GM12878 (cell line): ENCODE measurements at regions of chr1 and their contacts with region 1.

Region 1: GRCh38 chr1:101438359-101438758 is 201.5 kb downstream of the S1PR1 start:
- DNase-seq: no peak
- ATAC-seq: peak; percentile 73
- H3K4me3 ChIP-seq: no peak overlapping the region
- H3K27ac ChIP-seq: peak overlapping the region; percentile 90
- H3K4me1 ChIP-seq: peaks cover 46% of the 10 kb centered on the region
- H3K27me3 ChIP-seq: no peaks in the 10 kb centered on the region
- CTCF ChIP-seq: peak; percentile 67 to 86 (median 74)
- EP300 ChIP-seq: no peak
- POLR2A ChIP-seq: no peak
- RAD21 ChIP-seq: peak; percentile 97

Region 2: DNA sequence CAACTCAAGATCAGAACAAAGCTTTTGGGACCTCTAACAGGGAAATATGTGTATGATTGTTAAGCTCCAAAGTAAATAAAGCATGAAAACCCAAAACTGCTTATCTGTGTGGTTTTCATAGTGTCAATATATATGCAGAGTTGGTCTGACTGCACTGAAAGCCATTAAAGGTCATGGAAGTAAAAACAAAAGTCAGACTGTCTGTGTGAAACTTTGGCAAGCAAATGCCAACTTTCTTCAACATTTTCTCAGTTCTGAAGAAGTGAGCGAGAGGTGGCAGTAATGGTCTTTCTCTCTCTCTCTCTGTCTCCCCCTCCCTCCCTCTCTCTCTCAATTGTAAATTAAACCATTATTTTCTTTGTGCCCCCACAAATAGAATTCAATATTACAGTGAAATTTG is 301.6 kb before region 1 on chr1:
- CTCF ChIA-PET with region 1: interaction called, 27 read pairs
- POLR2A ChIA-PET with region 1: no interaction called
- RAD21 ChIA-PET with region 1: interaction called, 19 read pairs
- SMC1A ChIA-PET with region 1: interaction called, 17 read pairs
- in situ Hi-C with region 1: no loop called
- intact Hi-C with region 1: loop called (anchors 2 kb)
- DNase-seq: peak; percentile 68
- ATAC-seq: peak; percentile 86
- H3K4me3 ChIP-seq: no peak overlapping the region
- H3K27ac ChIP-seq: no peak overlapping the region
- H3K4me1 ChIP-seq: peaks cover 17% of the 10 kb centered on the region
- H3K27me3 ChIP-seq: no peaks in the 10 kb centered on the region
- CTCF ChIP-seq: peak; percentile 29 to 61 (median 41); a peak in 4 of 6 replicates
- EP300 ChIP-seq: no peak
- POLR2A ChIP-seq: no peak
- RAD21 ChIP-seq: peak; percentile 83

Region 3: GRCh38 chr1:101293461-101294051 is 144.8 kb before region 1 on chr1:
- CTCF ChIA-PET with region 1: interaction called, 253 read pairs
- POLR2A ChIA-PET with region 1: interaction called, 5 read pairs
- RAD21 ChIA-PET with region 1: interaction called, 118 read pairs
- SMC1A ChIA-PET with region 1: interaction called, 240 read pairs
- in situ Hi-C with region 1: no loop called
- intact Hi-C with region 1: loop called (anchors 1 kb)
- DNase-seq: peak; percentile 95
- ATAC-seq: peak; percentile 76
- H3K4me3 ChIP-seq: no peak overlapping the region; the same call in 1 of the 2 replicates
- H3K27ac ChIP-seq: peak overlapping the region; percentile 54
- H3K4me1 ChIP-seq: peaks cover 34% of the 10 kb centered on the region
- H3K27me3 ChIP-seq: no peaks in the 10 kb centered on the region
- CTCF ChIP-seq: no peak
- EP300 ChIP-seq: peak in 1 of 2 experiments; percentile 91; a peak in 3 of 4 replicates
- POLR2A ChIP-seq: no peak
- RAD21 ChIP-seq: 0 out of 2 replicates have a peak, but pooled peaks have one; percentile 8

Region 4: DNA sequence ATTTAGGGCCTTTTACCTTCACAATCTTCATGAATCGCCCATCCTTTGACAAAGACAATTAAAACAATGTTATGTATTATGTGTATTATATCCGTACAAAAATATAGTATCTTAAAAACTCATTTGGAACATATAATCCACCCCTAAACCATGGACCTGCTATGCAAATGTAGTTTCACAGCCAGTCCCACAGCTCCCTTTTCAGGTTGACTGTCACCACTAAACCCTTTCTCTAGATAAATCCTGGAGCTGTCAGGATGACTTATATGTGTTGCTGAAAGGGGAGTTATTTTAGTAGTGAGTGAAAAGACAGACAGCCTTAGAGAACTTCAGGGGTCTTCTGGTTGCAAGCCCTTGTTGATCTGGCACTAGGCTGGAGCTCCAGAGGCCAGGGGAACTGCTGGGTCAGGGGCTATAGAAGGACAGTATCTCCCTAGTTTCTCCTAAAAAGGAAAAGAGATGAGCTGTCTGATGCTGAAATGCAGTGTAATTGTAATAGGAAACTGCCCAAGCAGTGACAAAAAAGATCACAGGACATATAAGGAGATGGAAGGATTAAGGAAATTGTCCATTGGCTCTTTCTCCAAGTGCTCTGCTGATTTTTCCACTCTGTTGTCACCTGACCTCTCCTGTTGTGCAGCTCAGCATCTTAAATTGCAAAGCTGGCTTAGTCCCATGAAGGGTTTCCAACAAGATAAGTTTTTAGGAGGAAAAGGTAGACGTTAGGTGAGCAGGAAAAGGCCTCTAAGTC is 73.8 kb before region 1 on chr1:
- CTCF ChIA-PET with region 1: interaction called, 74 read pairs
- POLR2A ChIA-PET with region 1: interaction called, 6 read pairs
- RAD21 ChIA-PET with region 1: interaction called, 6 read pairs
- SMC1A ChIA-PET with region 1: interaction called, 58 read pairs
- in situ Hi-C with region 1: no loop called
- intact Hi-C with region 1: no loop called
- DNase-seq: no peak
- ATAC-seq: peak; percentile 68
- H3K4me3 ChIP-seq: no peak overlapping the region
- H3K27ac ChIP-seq: peak overlapping the region; percentile 83
- H3K4me1 ChIP-seq: peaks cover 29% of the 10 kb centered on the region
- H3K27me3 ChIP-seq: no peaks in the 10 kb centered on the region
- CTCF ChIP-seq: no peak
- EP300 ChIP-seq: 0 out of 4 replicates have a peak, but pooled peaks of 1 of the 2 experiments have one; percentile 15
- POLR2A ChIP-seq: no peak
- RAD21 ChIP-seq: no peak

Region 5: DNA sequence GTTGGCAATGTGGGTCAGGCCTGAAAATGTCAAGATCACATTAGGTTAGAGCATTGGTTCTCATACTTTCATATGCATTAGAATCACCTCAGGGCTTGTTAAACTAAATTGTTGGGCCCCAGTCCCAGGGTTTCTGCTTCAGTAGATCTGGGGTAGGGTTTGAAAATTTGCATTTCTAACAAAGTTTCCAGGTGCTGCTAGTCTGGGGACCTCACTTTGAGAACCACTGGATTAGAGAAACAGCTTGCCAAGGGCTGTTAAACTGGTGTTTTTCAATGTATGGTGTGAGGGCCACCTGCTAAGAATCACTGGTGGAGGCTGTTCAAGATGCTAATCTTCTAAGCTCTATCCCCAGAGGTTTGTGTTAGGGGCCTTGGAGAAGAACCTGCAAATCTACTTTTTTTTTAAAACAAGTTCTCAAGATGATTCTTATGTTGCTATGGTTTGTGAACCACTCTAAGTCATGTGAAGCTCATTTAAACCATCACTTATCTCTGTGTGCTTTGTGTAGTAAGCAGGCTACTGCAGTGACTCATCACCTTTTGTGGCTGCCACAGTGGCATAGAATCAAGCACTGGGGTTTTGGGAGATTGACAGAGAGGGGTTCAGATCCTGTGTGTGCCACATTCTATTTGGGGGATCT is 49.3 kb before region 1 on chr1:
- CTCF ChIA-PET with region 1: interaction called, 16 read pairs
- POLR2A ChIA-PET with region 1: interaction called, 5 read pairs
- RAD21 ChIA-PET with region 1: interaction called, 60 read pairs
- SMC1A ChIA-PET with region 1: interaction called, 37 read pairs
- in situ Hi-C with region 1: no loop called
- intact Hi-C with region 1: loop called (anchors 1 kb)
- DNase-seq: peak; percentile 90
- ATAC-seq: peak; percentile 93
- H3K4me3 ChIP-seq: no peak overlapping the region
- H3K27ac ChIP-seq: peak overlapping the region; percentile 96
- H3K4me1 ChIP-seq: peaks cover 34% of the 10 kb centered on the region
- H3K27me3 ChIP-seq: no peaks in the 10 kb centered on the region
- CTCF ChIP-seq: no peak
- EP300 ChIP-seq: no peak; a peak in 1 of 4 replicates
- POLR2A ChIP-seq: no peak
- RAD21 ChIP-seq: peak; percentile 15; the same call in 1 of the 2 replicates

Region 6: DNA sequence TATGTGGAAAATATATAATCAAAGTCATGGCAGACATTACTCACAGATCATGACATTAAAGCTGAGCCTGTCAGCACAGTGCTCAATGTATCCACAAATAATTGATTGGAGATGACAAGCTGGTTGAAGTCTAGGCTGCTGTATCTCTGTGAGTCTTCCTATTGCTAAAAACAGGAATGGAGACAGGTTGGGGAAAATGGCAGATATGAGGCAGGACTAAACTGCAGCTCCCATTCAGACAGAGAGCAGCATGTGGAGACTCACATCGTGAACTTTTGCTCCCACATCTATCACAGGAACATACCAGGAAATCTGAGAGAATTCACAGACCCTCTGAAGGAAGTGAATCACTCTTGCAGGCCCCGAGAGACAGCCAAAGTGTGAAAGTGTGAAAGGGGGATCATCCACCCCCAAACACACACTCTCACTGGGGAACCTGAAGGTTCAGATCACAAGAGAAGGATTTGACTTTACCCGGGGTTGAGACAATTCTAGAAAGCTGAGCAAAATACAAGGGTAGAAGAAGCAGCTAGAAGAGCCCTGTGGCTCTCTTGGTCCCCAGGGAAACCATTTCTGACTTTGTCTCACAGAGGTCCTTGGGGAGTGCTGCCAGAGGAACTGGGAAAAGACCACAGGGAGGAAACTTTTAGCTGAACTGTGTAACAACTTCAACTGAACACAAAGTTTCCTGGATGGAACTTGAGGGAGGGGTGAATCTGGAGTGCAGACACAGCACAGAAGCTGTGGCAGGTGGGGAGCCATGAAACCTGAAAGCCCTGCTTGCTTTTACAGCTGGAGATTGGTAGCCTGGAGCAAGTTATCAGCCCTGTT is 28.1 kb before region 1 on chr1:
- CTCF ChIA-PET with region 1: interaction called, 323 read pairs
- POLR2A ChIA-PET with region 1: interaction called, 209 read pairs
- RAD21 ChIA-PET with region 1: interaction called, 503 read pairs
- SMC1A ChIA-PET with region 1: interaction called, 507 read pairs
- in situ Hi-C with region 1: no loop called
- intact Hi-C with region 1: loop called (anchors 1 kb)
- DNase-seq: peak; percentile 99
- ATAC-seq: peak; percentile 64
- H3K4me3 ChIP-seq: no peak overlapping the region
- H3K27ac ChIP-seq: peak overlapping the region; percentile 98
- H3K4me1 ChIP-seq: peaks cover 51% of the 10 kb centered on the region
- H3K27me3 ChIP-seq: no peaks in the 10 kb centered on the region
- CTCF ChIP-seq: no peak
- EP300 ChIP-seq: peak in 1 of 2 experiments; percentile 67; a peak in 1 of 4 replicates
- POLR2A ChIP-seq: peak; percentile 59
- RAD21 ChIP-seq: peak; percentile 42; the same call in 1 of the 2 replicates

Region 7: GRCh38 chr1:101474039-101474665 is 35.8 kb after region 1 on chr1:
- CTCF ChIA-PET with region 1: interaction called, 19 read pairs
- POLR2A ChIA-PET with region 1: no interaction called
- RAD21 ChIA-PET with region 1: interaction called, 4 read pairs
- SMC1A ChIA-PET with region 1: interaction called, 10 read pairs
- in situ Hi-C with region 1: no loop called
- intact Hi-C with region 1: no loop called
- DNase-seq: no peak
- ATAC-seq: peak; percentile 90
- H3K4me3 ChIP-seq: no peak overlapping the region
- H3K27ac ChIP-seq: no peak overlapping the region
- H3K4me1 ChIP-seq: no peaks in the 10 kb centered on the region
- H3K27me3 ChIP-seq: no peaks in the 10 kb centered on the region
- CTCF ChIP-seq: peak; percentile 38 to 54 (median 51)
- EP300 ChIP-seq: no peak
- POLR2A ChIP-seq: no peak
- RAD21 ChIP-seq: peak; percentile 27; the same call in 1 of the 2 replicates